ENCODE measurements at regions of chr20 and their contacts with region 1.

Region 1: GRCh38 chr20:10034717-10035571 is at the start of gene ANKEF1:
- DNase-seq: peak; percentile 73 to 82
- ATAC-seq: peak; percentile 95 to 99 (median 98)
- H3K4me3 ChIP-seq: peak within 1 kb of the TSS; percentile 79
- H3K27ac ChIP-seq: no peak within 1 kb of the TSS
- H3K4me1 ChIP-seq: no peaks in the 10 kb centered on the region
- H3K27me3 ChIP-seq: no peaks in the 10 kb centered on the region
- CTCF ChIP-seq: no peak
- total RNA-seq, gene ANKEF1: 1.1 to 2.7 (median 1.7) TPM

Region 2: DNA sequence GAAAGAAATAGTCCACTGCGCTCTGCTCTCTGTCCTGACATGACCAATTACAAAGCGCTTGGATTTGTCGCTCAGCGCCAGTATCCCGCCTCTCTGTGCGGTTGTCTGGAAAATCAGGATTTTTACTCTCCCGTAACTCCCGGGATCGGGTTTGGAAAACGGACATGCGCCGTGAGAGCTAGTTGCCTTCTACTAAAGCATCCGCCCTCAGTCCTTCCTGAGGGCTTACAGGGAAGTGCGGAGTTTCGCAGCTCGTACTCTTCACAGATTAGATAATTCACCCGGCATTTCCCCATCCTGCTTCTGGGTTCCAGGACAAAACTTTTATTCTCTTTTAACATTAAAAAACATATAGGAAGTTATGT is 399.5 kb after region 1 on chr20:
- intact Hi-C with region 1: loop called in 1 of 2 experiments (anchors 10 kb)
- DNase-seq: peak; percentile 89 to 95
- ATAC-seq: peak; percentile 88 to 92 (median 90)
- H3K4me3 ChIP-seq: peak overlapping the region; percentile 95
- H3K27ac ChIP-seq: peak overlapping the region; percentile 96
- H3K4me1 ChIP-seq: peaks cover 34% of the 10 kb centered on the region
- H3K27me3 ChIP-seq: no peaks in the 10 kb centered on the region
- CTCF ChIP-seq: no peak